ENCODE measurements at regions of chr17 and their contacts with region 1.

Region 1: DNA sequence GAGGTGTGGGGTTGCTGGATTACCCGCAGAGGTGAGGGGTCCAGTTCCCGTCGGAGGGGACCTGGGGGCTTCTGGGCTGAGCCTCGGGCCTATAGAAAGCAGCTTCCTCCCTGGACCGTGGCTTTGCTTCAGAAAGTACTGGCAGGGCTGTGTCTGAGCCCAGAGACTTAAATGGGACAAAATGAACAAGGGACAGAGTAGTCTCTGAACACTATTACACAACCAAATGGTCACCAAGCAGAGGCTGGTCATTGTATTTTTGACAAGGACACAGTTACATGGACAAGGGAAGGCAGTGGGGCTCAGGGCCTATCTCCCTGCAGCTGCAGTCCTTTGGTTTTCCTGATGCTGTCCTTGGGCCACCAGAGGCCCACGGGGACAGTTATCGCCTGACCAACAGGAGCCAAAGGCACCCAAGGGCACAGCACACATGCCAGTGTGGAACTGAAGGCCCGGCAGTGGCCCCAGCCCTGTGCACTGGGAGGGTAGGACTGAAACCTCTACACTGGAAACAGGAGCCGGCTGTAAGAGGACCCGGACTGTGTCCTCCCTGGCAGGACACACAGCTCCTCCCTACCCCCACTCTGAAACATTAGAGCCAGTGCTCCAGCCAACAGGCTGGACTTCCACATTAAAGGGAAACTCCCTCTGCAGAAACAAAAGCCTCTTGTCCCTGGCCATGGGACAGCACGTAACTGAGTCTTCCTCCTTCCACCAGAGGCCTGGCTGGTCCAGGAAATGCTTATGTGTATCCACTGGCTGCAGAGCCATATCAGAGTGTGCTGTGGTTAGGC is 26.0 kb upstream of the ERN1 start:
- DNase-seq: peak; percentile 82
- ATAC-seq: peak; percentile 96

Region 2: DNA sequence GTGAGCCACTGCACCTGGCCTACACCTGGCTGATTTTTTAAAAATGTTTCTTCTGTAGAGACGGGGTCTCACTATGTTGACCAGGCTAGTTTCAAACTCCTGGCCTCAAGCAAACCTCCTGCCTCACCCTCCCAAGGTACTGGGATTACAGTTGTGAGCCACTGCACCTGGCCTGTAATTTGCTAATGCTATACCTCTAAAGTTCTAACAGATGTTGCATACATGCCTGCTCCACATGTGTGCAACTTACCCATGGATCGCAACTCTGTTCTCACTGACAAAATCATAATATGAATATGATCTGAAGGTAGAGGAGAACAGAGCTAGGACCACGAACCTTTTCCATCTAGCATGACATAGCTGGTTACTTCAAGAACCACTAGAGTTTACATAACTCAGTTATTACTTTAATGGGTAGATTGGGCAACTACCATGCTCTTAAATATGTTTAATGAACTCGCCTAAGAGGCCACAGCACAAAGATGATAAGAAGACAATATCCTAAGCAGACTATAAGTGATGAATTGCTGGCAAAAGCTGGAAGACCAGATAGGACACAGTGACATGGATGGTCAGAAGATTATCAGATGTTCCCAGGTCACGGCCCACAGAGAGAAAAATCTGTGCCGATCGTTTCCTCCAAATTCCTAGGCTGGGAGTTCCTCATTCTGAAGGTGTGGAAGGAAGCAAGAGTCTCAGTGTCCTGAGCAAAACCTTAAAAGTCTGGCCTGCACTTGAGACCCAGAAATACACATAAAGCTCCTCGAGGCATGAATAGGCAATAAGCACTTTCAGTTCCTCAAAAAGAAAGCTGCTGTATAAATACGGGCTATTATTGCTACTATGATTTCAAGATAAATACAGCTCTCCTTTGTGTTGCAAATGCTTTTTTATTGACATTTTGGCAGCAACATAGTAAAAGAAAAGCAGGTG is 81.9 kb before region 1 on chr17:
- intact Hi-C with region 1: no loop called
- DNase-seq: no peak
- ATAC-seq: peak; percentile 48

Region 3: DNA sequence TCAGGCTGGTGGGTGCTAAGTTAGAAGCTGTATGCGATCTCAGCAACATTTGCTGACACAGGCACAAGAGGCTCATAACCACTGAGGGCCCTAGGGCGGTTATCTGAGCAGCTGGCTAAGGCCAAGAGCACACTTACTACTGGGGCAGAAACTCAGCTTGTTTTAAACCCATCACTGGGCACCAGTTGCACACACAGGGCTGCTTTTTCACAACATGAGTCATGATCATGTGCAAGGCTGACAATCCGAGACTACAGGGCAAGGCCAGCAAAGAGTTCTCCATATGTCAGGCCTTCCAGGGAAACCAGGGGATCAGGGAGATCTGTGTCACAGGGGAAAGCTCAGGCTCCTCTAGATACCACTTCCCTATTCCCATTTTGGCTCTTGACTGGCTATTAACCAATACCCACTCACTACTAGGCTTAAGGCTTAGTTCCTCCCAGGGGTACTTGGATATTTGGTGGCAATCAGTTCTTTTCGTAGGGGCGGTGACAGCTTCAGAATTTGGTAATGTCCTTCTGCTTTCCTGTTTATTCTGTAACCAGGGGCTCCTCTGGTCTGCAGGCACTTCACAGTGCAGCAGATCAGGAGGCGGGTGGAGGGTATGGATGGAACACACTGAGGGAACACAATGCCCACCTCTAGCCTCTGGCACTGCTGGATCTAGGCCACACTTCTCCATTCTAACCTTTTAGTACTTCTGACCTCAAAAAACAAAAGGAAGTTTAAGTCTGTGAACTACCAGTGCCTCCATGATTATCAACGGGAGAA is 18.9 kb after region 1 on chr17:
- intact Hi-C with region 1: no loop called
- DNase-seq: no peak
- ATAC-seq: peak; percentile 67

Region 4: GRCh38 chr17:64262417-64263260 is 106.7 kb after region 1 on chr17 and contains the start of gene TEX2:
- intact Hi-C with region 1: loop called (anchors 2 kb)
- DNase-seq: peak; percentile 88
- ATAC-seq: peak; percentile 55
- total RNA-seq, gene TEX2: 56.1 TPM